ENCODE measurements at regions of chr6 and their contacts with region 1.

Region 1: GRCh38 chr6:141562851-141563763 is 569.6 kb upstream of the GJE1 start:
- DNase-seq: peak; percentile 74
- ATAC-seq: peak; percentile 92
- H3K4me3 ChIP-seq: no peak overlapping the region
- H3K27ac ChIP-seq: no peak overlapping the region
- H3K4me1 ChIP-seq: peaks cover 8% of the 10 kb centered on the region
- H3K27me3 ChIP-seq: no peaks in the 10 kb centered on the region
- CTCF ChIP-seq: peak; percentile 86
- EP300 ChIP-seq: no peak
- POLR2A ChIP-seq: no peak
- RAD21 ChIP-seq: peak; percentile 90

Region 2: DNA sequence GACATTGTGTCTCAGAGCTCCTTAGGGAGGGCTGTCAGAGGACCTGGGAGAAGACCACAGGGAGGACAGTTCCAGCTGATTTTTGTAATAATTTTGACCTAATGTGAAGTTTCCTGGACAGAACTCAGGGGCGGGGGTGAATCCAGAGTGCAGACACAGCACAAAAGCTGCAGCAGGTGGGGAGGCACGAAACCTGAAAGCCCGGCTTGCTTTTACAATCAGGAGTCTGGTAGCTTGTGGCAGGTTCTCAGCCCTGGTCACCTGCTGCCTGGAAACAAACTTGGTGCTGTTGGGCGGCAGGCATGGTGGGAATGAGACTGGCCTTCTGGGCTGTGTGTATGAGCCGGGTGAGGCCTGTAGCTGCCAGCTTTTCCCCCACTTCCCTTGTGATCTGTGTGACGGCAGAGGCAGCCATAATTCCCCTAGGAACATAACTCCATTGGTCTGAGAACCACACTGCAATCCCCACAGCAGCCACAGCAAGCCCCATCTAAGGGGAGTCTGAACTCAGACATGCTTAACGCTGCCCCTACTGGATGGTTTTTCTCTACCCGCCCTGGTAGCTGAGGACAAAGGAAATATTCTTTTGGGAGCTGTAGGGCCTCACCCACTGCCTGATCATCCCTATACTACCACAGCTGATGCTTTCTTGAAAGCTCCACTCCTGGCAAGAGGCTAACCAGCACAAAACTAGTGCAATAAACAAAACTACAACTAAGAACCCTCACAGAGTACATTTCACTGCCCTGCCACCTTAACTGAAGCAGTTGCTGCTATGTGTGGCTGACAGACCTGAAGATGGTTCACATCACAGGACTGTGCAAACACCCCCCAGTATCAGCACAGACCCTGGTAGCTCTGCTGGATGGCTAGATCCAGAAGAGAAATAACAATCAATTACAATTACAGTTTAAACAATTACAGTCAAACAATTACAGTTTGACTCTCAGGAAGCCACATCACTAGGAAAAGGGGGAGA is 485.5 kb before region 1 on chr6:
- CTCF ChIA-PET with region 1: no interaction called
- POLR2A ChIA-PET with region 1: no interaction called
- in situ Hi-C with region 1: no loop called
- intact Hi-C with region 1: loop called (anchors 2 kb)
- DNase-seq: peak; percentile 80
- ATAC-seq: peak; percentile 100
- H3K4me3 ChIP-seq: peak overlapping the region; percentile 27 to 60 (median 46); a peak in 5 of 6 replicates
- H3K27ac ChIP-seq: no peak overlapping the region
- H3K4me1 ChIP-seq: peaks cover 9% of the 10 kb centered on the region; the same call in 1 of the 2 replicates
- H3K27me3 ChIP-seq: no peaks in the 10 kb centered on the region
- CTCF ChIP-seq: peak; percentile 58
- EP300 ChIP-seq: no peak
- POLR2A ChIP-seq: no peak
- RAD21 ChIP-seq: peak; percentile 57; the same call in 1 of the 2 replicates

Region 3: GRCh38 chr6:141252828-141253608 is 310.1 kb before region 1 on chr6:
- CTCF ChIA-PET with region 1: no interaction called
- POLR2A ChIA-PET with region 1: no interaction called
- in situ Hi-C with region 1: no loop called
- intact Hi-C with region 1: no loop called
- DNase-seq: no peak
- ATAC-seq: no peak
- H3K4me3 ChIP-seq: no peak overlapping the region
- H3K27ac ChIP-seq: no peak overlapping the region
- H3K4me1 ChIP-seq: no peaks in the 10 kb centered on the region
- H3K27me3 ChIP-seq: no peaks in the 10 kb centered on the region
- CTCF ChIP-seq: no peak
- EP300 ChIP-seq: no peak
- POLR2A ChIP-seq: no peak
- RAD21 ChIP-seq: no peak

Region 4: GRCh38 chr6:141313986-141314385 is 249.1 kb before region 1 on chr6:
- CTCF ChIA-PET with region 1: no interaction called
- POLR2A ChIA-PET with region 1: no interaction called
- in situ Hi-C with region 1: no loop called
- intact Hi-C with region 1: loop called (anchors 2 kb)
- DNase-seq: peak; percentile 10
- ATAC-seq: no peak
- H3K4me3 ChIP-seq: no peak overlapping the region
- H3K27ac ChIP-seq: no peak overlapping the region
- H3K4me1 ChIP-seq: no peaks in the 10 kb centered on the region
- H3K27me3 ChIP-seq: no peaks in the 10 kb centered on the region
- CTCF ChIP-seq: no peak
- EP300 ChIP-seq: no peak
- POLR2A ChIP-seq: no peak
- RAD21 ChIP-seq: no peak

Measured in HepG2 (cell line).